ENCODE measurements at regions of chr10 and their contacts with region 1.

Region 1: GRCh38 chr10:67779465-67780203 is 58.4 kb downstream of the DNAJC12 start:
- DNase-seq: no peak
- ATAC-seq: peak; percentile 95

Region 2: GRCh38 chr10:67697724-67698131 is 81.9 kb before region 1 on chr10:
- intact Hi-C with region 1: loop called (anchors 5 kb)
- DNase-seq: no peak
- ATAC-seq: peak; percentile 71

Measured in Right ventricle myocardium superior (tissue), 1 donor.